Aorta (tissue), 5 donors: ENCODE measurements at regions of chr12 and their contacts with region 1.

Region 1: GRCh38 chr12:108950991-108951739 is 69.7 kb downstream of the SVOP start:
- DNase-seq: peak; percentile 71 to 84
- ATAC-seq: no peak
- H3K4me3 ChIP-seq: no peak overlapping the region
- H3K27ac ChIP-seq: no peak overlapping the region
- H3K4me1 ChIP-seq: no peaks in the 10 kb centered on the region
- H3K27me3 ChIP-seq: no peaks in the 10 kb centered on the region

Region 2: GRCh38 chr12:108562348-108563135 is 388.6 kb before region 1 on chr12 and contains the start of gene ISCU:
- intact Hi-C with region 1: loop called (anchors 5 kb)
- DNase-seq: peak; percentile 99 to 100
- ATAC-seq: peak; percentile 95
- H3K4me3 ChIP-seq: peak within 1 kb of the TSS; percentile 60 to 88
- H3K27ac ChIP-seq: peak within 1 kb of the TSS in 1 of 2 donors; percentile 87
- H3K4me1 ChIP-seq: peaks cover 0 to 9% of the 10 kb centered on the region in 2 donors
- H3K27me3 ChIP-seq: no peaks in the 10 kb centered on the region
- total RNA-seq, gene ISCU: 129 to 144 TPM

Region 3: GRCh38 chr12:108618079-108618952 is 332.8 kb before region 1 on chr12:
- intact Hi-C with region 1: loop called (anchors 5 kb)
- DNase-seq: peak; percentile 86 to 93
- ATAC-seq: peak; percentile 85
- H3K4me3 ChIP-seq: no peak overlapping the region
- H3K27ac ChIP-seq: no peak overlapping the region
- H3K4me1 ChIP-seq: no peaks in the 10 kb centered on the region
- H3K27me3 ChIP-seq: no peaks in the 10 kb centered on the region

Region 4: DNA sequence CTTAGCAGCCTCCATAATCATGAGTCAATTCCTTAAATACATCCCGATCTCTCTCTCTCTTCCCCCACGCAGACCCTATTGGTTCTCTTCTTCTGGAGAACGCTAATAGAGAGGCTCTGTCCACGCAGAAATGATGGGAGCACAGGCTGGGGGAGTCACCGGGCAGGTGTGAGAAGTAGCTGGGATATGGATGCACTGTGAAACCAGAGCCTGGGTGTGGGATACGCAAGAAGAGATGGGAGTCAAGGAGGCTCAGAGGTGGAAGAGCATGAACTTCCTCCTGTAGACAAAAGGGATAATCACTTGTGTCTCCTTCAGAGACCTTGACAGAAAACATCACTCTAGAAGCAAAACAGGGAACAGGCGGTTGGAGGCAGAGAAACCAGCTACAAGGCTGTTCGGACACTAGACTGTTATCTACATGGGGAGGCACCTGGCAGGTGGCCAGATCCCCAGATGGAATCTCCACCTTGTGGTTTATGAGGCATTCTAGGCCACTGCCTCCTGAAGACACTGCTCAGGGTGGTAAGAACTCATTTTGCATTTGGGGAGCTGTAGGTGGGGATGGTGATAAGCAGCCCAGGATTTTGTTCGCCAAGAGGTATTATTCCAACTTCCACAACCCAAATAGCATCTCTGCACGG is 310.2 kb before region 1 on chr12:
- intact Hi-C with region 1: loop called in 1 of 2 experiments (anchors 10 kb)
- DNase-seq: no peak
- ATAC-seq: no peak
- H3K4me3 ChIP-seq: no peak overlapping the region
- H3K27ac ChIP-seq: no peak overlapping the region
- H3K4me1 ChIP-seq: peaks cover 0 to 4% of the 10 kb centered on the region in 2 donors
- H3K27me3 ChIP-seq: no peaks in the 10 kb centered on the region

Region 5: GRCh38 chr12:108816652-108817335 is 134.4 kb before region 1 on chr12:
- intact Hi-C with region 1: loop called in 1 of 2 experiments (anchors 5 kb)
- DNase-seq: peak in 1 of 2 donors; percentile 60
- ATAC-seq: peak; percentile 36
- H3K4me3 ChIP-seq: no peak overlapping the region
- H3K27ac ChIP-seq: no peak overlapping the region
- H3K4me1 ChIP-seq: no peaks in the 10 kb centered on the region
- H3K27me3 ChIP-seq: no peaks in the 10 kb centered on the region

Region 6: GRCh38 chr12:108861878-108862587 is 89.1 kb before region 1 on chr12:
- intact Hi-C with region 1: loop called in 1 of 2 experiments (anchors 5 kb)
- DNase-seq: peak in 1 of 2 donors; percentile 73
- ATAC-seq: no peak
- H3K4me3 ChIP-seq: no peak overlapping the region
- H3K27ac ChIP-seq: no peak overlapping the region
- H3K4me1 ChIP-seq: no peaks in the 10 kb centered on the region
- H3K27me3 ChIP-seq: no peaks in the 10 kb centered on the region

Region 7: GRCh38 chr12:109182041-109182839 is 231.1 kb after region 1 on chr12:
- intact Hi-C with region 1: no loop called
- DNase-seq: peak in 1 of 2 donors; percentile 16
- ATAC-seq: no peak
- H3K4me3 ChIP-seq: no peak overlapping the region
- H3K27ac ChIP-seq: no peak overlapping the region
- H3K4me1 ChIP-seq: no peaks in the 10 kb centered on the region
- H3K27me3 ChIP-seq: no peaks in the 10 kb centered on the region